Spleen (tissue), 13 donors: ENCODE measurements at regions of chr2 and their contacts with region 1.

Region 1: DNA sequence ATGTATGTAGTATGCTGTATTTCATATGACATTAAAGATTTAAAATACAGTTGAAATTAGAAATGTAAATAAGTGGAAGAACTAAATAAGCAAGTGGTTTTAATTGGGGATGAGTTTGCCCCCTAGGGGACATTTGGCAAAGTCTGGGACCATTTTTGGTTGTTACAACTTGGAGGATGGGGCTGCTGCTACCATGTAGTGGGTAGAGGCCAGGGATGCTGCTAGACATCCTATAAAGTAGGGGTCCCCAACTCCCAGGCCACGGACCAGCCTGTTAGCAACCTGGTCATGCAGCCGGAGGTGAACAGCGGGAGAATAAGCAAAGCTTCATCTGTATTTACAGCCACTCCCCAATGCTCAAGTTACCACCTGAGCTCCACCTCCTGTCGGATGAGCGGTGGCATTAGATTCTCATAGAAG is 27.9 kb upstream of the ASNSD1 start:
- DNase-seq: no peak
- H3K4me3 ChIP-seq: no peak overlapping the region
- H3K27ac ChIP-seq: no peak overlapping the region
- H3K4me1 ChIP-seq: no peaks in the 10 kb centered on the region
- H3K27me3 ChIP-seq: no peaks in the 10 kb centered on the region
- CTCF ChIP-seq: peak in 7 of 11 experiments; percentile 38 to 66 (median 50)
- POLR2A ChIP-seq: no peak

Region 2: GRCh38 chr2:189096769-189097447 is 536.5 kb before region 1 on chr2:
- intact Hi-C with region 1: loop called (anchors 10 kb)
- DNase-seq: no peak
- H3K4me3 ChIP-seq: no peak overlapping the region
- H3K27ac ChIP-seq: no peak overlapping the region
- H3K4me1 ChIP-seq: no peaks in the 10 kb centered on the region
- H3K27me3 ChIP-seq: no peaks in the 10 kb centered on the region
- CTCF ChIP-seq: no peak
- POLR2A ChIP-seq: no peak

Region 3: DNA sequence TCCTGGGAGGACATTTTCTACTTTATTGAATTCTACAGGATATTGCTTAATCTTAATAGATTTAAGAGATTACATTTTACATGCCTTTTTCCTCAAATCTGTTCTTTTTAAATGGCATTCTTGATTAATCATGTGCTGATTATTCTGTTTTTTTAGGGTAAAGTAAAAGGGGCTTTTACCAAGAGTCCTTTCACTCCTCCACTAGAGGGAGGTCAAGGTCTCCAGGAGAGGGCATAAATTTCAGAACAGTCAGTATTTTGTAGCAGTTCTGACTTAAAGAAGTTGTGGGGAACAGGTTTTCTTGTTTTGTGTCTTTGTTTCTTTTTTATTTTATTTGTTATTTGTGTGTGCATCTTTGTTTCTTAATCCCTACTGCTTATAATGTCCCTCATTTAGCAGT is 166.7 kb before region 1 on chr2:
- intact Hi-C with region 1: loop called (anchors 10 kb)
- DNase-seq: no peak
- H3K4me3 ChIP-seq: no peak overlapping the region
- H3K27ac ChIP-seq: peak overlapping the region in 3 of 8 donors; percentile 15 to 37 (median 36)
- H3K4me1 ChIP-seq: peaks cover 0 to 32% (median 14%) of the 10 kb centered on the region in 6 donors
- H3K27me3 ChIP-seq: no peaks in the 10 kb centered on the region
- CTCF ChIP-seq: peak in 9 of 11 experiments; percentile 3 to 57 (median 37)
- POLR2A ChIP-seq: no peak

Region 4: GRCh38 chr2:189534854-189535832 is 98.3 kb before region 1 on chr2:
- intact Hi-C with region 1: no loop called
- DNase-seq: no peak
- H3K4me3 ChIP-seq: no peak overlapping the region
- H3K27ac ChIP-seq: peak overlapping the region in 5 of 8 donors; percentile 40 to 64 (median 56)
- H3K4me1 ChIP-seq: no peaks in the 10 kb centered on the region
- H3K27me3 ChIP-seq: no peaks in the 10 kb centered on the region
- CTCF ChIP-seq: no peak
- POLR2A ChIP-seq: no peak

Region 5: DNA sequence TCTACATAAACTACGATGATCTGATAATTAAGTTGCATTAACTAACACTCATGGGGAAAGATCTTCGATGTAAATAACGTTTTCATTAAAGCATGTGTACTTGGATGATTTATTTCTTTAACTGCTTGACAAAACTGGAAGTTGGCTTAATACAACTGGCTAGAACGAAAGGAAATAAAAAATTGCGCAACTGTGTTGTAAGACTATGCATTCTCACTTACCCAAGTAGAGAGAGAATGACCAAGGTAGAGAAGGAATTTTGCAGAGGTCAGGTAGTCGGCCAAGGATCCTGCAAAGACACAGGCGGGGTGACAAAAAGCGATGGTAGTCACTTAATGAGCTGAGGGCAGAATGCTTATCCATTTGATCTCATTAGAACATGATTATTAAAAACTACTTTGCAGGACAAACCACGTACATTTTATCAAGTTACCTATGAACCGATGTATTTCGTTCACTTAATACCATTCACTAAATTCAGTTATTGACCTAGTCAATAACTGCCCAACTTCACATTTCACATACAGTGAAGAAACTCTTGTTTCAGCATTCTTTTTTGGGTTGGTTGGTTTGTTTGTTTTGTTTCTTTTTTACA is 53.7 kb before region 1 on chr2:
- intact Hi-C with region 1: loop called (anchors 10 kb)
- DNase-seq: no peak
- H3K4me3 ChIP-seq: peak overlapping the region; percentile 49 to 84 (median 58)
- H3K27ac ChIP-seq: peak overlapping the region; percentile 87 to 96 (median 92)
- H3K4me1 ChIP-seq: peaks cover 9 to 85% (median 41%) of the 10 kb centered on the region in 6 donors
- H3K27me3 ChIP-seq: peaks cover 0 to 31% (median 7%) of the 10 kb centered on the region in 7 donors
- CTCF ChIP-seq: no peak
- POLR2A ChIP-seq: no peak